ENCODE measurements at regions of chr3 and their contacts with region 1.

Region 1: DNA sequence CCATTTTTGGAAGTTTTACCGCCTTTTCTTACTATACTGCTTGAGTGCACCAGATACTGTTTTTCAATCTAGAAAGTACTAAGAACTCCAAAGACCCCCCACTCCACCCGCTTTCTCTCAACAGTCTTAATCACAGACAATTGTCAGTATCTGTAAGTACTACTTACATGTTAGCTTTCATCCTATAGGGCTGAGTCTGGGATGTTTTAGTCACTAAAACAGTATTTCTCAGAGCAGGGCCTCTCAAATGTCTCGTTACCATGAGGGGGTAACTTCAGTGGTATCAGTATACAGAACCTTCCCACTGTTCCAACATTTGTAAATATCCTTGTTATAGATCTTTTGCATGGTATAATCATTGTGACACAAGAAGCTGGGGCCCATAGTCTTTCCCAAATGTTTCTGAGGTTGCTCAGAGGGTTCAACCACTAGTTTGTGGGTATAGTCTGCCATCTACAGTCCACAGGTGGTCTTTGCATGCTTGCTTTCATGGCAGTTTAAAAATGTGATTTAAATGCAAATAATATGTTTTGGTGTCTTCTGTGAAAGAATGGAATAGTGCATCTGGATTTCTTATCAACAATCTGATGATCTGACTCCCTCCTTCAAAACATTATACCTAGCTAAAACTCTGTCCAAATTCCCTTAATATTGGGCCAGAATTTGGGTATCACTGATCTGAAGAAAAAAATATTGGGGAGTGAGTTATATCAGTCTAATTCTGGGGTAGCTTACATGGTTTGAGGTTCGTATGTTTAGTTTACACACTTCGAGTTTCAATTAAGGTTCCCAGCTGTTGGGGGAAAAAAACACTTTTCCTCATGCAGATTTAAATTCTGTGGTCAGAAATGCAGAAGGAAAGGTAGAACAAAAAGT is 18.0 kb upstream of the DNAJC13 start:
- DNase-seq: no peak

Region 2: GRCh38 chr3:132256989-132257388 is 142.3 kb before region 1 on chr3:
- intact Hi-C with region 1: loop called (anchors 2 kb)
- DNase-seq: no peak

Region 3: DNA sequence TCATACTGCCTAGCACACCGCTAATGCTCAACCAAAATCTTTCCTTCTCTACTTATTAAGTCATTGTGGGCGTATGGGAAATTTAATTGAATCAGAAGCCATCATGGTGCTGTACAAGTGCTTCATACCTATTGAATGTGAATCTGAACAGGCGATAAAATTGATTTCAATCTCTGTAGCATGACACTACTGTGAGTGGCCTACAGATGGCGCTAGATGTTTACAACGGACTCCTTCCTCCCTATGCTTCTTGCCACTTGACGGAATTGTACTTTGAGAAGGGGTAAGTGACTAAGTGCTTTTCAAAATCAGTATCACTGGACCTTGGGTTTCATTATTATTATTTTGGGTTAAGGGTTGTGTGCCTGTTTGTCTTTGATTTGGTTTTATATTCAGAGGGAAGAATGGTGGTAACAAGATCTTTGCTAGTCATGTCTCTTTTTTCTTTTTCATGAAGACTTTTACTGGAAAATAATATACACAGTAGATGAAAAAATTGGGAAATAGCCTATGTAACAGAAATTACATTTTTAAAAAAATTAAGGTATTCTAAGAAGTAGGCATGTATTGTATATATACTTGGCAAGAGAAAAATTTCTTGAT is 46.6 kb before region 1 on chr3:
- intact Hi-C with region 1: loop called (anchors 2 kb)
- DNase-seq: no peak

Measured in cardiac septum (tissue), 1 donor.